ENCODE measurements at regions of chr1 and their contacts with region 1.

Region 1: DNA sequence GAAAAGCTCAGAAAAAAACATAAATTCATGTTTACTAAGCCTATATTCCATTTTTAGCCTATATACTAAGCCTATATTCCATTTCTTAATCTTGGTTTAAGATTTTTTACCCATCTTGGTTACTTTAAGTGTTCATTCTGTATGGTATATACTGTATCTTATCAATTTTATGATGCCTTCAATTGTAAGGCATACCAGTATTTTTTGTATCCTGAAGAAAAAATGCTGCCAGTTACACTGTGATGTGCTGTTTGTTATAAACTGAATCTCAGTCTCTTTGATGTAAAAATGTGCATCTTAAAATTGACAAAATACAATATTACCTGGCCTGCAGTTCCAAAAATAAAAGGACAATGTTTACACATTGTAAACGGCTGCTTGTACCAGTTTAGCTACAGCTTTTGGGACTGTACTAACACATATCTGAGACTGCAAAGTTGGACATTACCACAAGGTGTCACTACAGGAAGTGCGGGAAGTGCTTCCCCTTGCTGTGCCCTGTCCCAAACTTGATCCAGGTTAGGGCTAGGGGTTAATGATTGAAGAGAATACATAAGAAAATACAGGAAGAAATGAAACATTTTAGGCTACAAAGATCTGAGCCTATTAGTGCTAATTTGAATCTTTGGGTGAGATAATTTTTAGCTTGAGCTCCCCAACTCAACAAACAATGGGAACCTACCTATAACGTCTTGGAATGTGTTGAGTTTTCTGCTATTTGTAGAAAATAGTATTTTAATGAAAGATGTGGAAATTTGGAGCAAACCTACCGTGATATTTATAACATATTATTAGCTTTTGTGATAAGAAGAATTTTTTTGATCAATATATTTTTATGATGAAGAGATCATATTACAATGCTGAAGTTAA is 108.9 kb downstream of the LBR start:
- DNase-seq: peak; percentile 58 to 71
- H3K4me3 ChIP-seq: no peak overlapping the region
- H3K4me3 Mint-ChIP-seq: no peak overlapping the region
- H3K27ac Mint-ChIP-seq: no peak overlapping the region
- H3K4me1 ChIP-seq: 0 out of 2 replicates have a peak, but pooled peaks cover 6% of the 10 kb centered on the region
- H3K4me1 Mint-ChIP-seq: peaks cover 10% of the 10 kb centered on the region
- H3K27me3 ChIP-seq: no peaks in the 10 kb centered on the region
- H3K27me3 Mint-ChIP-seq: no peaks in the 10 kb centered on the region
- CTCF ChIP-seq: peak; percentile 77 to 80

Region 2: DNA sequence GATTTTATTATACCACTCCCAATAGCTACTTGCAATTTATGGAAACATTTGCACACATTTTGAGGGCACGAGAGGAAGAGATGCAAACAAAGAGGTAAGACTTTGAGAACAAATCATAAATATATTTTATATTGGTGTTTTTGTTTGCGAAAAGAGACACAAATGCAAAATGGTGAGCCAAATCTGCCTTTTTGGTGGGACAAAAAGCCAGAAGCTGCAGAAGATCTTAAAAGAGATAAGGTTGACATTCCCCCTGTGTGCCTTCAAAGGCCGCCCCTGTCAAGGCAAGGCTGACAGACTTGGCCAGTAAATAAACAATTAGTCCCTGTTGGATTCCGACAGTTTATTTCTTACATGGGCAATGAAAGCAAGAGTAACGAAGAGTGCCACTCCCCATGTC is 13.9 kb before region 1 on chr1:
- CTCF ChIA-PET with region 1: no interaction called
- POLR2A ChIA-PET with region 1: no interaction called
- intact Hi-C with region 1: no loop called
- DNase-seq: no peak
- H3K4me3 ChIP-seq: no peak overlapping the region
- H3K4me3 Mint-ChIP-seq: no peak overlapping the region
- H3K27ac Mint-ChIP-seq: no peak overlapping the region
- H3K4me1 ChIP-seq: no peaks in the 10 kb centered on the region
- H3K4me1 Mint-ChIP-seq: no peaks in the 10 kb centered on the region
- H3K27me3 ChIP-seq: no peaks in the 10 kb centered on the region
- H3K27me3 Mint-ChIP-seq: no peaks in the 10 kb centered on the region
- CTCF ChIP-seq: no peak

Region 3: DNA sequence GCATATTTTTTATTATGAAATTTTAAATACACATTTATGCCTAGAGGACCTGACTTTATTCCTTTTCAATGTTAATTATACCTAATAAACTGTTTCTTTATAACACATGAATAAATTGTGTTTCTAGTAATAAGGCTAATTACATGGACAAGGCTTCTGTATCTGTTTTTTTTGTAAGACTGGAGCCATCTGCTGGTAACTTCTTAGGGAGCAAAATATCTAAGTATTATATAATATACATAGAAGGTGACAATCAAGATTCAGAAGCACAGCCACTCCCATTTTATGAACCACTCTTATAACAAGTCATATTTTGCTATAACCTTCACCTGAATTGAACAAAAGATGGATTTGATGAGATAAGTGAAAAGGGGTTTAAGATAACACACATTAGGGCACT is 24.7 kb after region 1 on chr1:
- CTCF ChIA-PET with region 1: interaction called, 4 read pairs
- POLR2A ChIA-PET with region 1: no interaction called
- intact Hi-C with region 1: loop called (anchors 1 kb)
- DNase-seq: peak in 1 of 2 experiments; percentile 3
- H3K4me3 ChIP-seq: no peak overlapping the region
- H3K4me3 Mint-ChIP-seq: no peak overlapping the region
- H3K27ac Mint-ChIP-seq: no peak overlapping the region
- H3K4me1 ChIP-seq: no peaks in the 10 kb centered on the region
- H3K4me1 Mint-ChIP-seq: no peaks in the 10 kb centered on the region
- H3K27me3 ChIP-seq: no peaks in the 10 kb centered on the region
- H3K27me3 Mint-ChIP-seq: no peaks in the 10 kb centered on the region
- CTCF ChIP-seq: peak in 1 of 2 experiments; percentile 9